Activated T-helper 2 cell treated with anti-CD3 and anti-CD28 coated beads, Interferon-gamma antibody, Interleukin-2, Interleukin-4, amounts not matched to agents 10 μg/mL and 5 μg/mL and 100 μg/mL, durations not matched to agents 14 hours and 24 hours and 36 hours (primary cell): ENCODE measurements at regions of chr2 and their contacts with region 1.

Region 1: GRCh38 chr2:20051532-20052228 is at the start of gene LAPTM4A:
- DNase-seq: peak; percentile 98
- H3K4me3 Mint-ChIP-seq: no peak within 1 kb of the TSS
- H3K27ac Mint-ChIP-seq: no peak within 1 kb of the TSS
- H3K4me1 Mint-ChIP-seq: peaks cover 23% of the 10 kb centered on the region
- H3K27me3 Mint-ChIP-seq: peaks cover 18% of the 10 kb centered on the region
- total RNA-seq, gene LAPTM4A: 26.9 and 27.3 TPM in 2 replicates

Region 2: DNA sequence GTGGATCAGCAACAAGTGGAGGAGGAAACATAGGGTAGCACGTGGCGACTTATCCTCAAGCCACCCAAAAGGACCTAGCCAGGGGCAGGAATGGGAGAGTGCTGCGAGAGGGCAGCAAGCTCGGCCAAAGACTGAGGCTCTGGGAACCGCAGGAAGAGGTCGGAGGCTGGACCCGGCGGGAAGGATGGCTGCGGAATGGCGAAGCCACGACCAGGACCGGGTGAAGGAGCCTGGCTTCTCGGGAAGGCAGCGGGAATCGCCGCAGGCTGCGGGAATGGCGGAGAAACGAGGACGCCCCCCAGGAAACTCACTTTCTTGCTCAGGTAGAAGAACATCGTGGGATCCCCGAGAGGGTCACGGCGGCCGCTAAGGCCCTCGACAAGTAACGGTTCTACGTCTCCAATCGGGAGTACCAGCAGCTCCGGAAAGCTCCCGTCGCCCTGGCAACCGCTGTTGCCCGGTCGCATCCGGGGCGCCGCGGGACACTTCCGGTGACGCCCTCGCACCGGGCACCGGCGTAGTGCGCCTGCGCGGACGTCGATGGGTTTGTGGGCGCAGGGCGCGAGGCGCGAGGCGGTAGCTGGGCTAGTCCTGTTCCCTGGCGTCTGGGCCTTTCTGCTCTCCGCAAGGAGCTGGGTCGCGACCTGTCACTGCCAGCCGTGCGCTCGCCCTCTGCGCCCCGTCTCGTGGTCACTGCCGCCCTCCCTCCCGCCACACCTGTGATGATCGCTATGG is 61.8 kb before region 1 on chr2 and contains the start of gene WDR35:
- intact Hi-C with region 1: loop called (anchors 1 kb)
- DNase-seq: peak; percentile 90
- H3K4me3 Mint-ChIP-seq: peak within 1 kb of the TSS; percentile 87
- H3K27ac Mint-ChIP-seq: peak within 1 kb of the TSS; percentile 70
- H3K4me1 Mint-ChIP-seq: peaks cover 18% of the 10 kb centered on the region
- H3K27me3 Mint-ChIP-seq: peaks cover 29% of the 10 kb centered on the region
- total RNA-seq, gene WDR35: 7.5 and 7.6 TPM in 2 replicates

Region 3: GRCh38 chr2:20015472-20016083 is 36.1 kb before region 1 on chr2:
- intact Hi-C with region 1: loop called (anchors 2 kb)
- DNase-seq: no peak
- H3K4me3 Mint-ChIP-seq: no peak overlapping the region
- H3K27ac Mint-ChIP-seq: no peak overlapping the region
- H3K4me1 Mint-ChIP-seq: peaks cover 3% of the 10 kb centered on the region
- H3K27me3 Mint-ChIP-seq: peaks cover 39% of the 10 kb centered on the region

Region 4: DNA sequence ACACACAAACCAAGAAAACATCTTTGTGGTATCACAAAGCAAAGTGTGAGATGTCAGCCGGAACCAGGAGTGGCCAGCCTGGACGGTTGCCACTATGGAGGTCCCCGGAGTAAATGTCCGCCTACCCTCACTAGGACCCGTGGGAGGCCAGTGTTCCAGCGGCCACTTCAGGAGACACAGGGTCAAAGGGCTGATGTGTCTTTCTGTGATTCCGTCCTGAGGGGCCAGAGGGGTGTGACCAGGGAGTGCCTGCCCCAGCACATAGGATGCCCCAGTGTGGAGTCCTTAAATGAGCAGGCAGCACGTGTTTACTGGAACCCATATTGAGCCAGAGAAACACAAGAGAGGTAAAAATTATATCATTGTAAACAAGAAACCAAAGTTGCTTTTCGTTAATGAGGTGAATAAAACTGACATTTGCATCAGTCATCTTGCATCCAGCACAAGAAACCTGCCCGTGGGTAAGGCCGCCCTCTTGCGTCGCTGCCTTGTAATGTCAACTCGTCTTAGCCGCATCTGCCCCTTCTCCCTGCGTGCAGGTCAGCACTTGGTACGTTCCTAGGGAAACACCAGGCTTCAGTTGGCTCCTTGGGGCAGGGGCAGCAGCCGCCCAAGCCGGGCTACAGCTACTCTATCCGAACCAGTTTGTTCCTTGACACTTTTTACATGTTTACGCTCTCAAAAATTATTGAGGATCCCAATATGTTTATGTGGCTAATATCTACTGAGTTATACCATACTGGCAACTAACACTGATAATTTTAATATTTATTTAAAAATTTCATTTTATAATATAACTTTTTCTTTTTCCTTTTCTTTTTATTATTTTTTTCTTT is 46.4 kb after region 1 on chr2:
- intact Hi-C with region 1: loop called (anchors 1 kb)
- DNase-seq: peak; percentile 46
- H3K4me3 Mint-ChIP-seq: no peak overlapping the region
- H3K27ac Mint-ChIP-seq: no peak overlapping the region
- H3K4me1 Mint-ChIP-seq: peaks cover 4% of the 10 kb centered on the region
- H3K27me3 Mint-ChIP-seq: peaks cover 10% of the 10 kb centered on the region

Region 5: GRCh38 chr2:20350753-20351554 is 299.3 kb after region 1 on chr2 and contains the start of gene PUM2:
- intact Hi-C with region 1: loop called (anchors 5 kb)
- DNase-seq: peak; percentile 97
- H3K4me3 Mint-ChIP-seq: peak within 1 kb of the TSS; percentile 93
- H3K27ac Mint-ChIP-seq: peak within 1 kb of the TSS; percentile 92
- H3K4me1 Mint-ChIP-seq: peaks cover 34% of the 10 kb centered on the region
- H3K27me3 Mint-ChIP-seq: no peaks in the 10 kb centered on the region
- total RNA-seq, gene PUM2: 121 and 127 TPM in 2 replicates

Region 6: DNA sequence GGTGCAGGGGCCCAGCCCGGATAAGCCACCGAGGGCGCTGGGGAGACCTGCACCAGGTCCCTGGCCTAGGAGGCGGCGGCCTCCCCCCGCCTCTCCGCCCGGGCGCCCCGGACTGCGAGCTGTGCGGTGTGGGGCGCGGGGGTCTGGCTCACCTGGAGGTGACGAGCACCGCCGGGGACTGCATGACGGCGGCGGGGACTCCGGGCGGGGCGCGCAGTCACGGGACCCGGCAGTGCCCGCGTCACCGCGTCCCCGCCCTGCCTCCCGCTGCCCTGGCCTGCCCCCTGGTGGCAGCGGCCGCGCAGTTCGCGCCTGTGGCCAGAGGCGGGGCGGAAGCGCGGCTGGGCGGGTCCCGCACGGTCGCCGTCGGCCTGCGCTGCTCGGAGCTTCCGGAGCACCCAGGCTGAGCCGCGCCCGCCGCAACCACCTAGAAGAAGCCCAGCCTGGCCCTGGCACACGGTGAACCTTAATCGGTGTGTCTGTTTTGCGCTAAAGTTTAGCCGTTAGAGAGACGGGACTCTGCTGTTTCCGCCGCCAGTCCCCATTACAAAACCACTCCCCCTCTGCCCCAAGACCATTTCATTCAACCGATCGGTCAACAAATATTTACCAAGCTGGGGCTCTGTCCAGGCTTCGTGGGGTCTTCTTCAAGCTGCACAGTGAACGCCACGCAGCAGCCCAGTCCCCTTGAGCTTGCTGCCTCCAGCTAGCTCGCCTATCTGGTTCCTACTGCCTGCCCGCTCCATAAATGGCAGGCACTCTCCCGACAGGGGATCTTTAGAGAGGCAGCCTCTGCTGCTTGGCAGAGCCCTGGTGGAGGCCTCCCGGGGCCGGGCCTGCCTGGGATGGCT is 599.4 kb after region 1 on chr2 and contains the start of gene HS1BP3:
- intact Hi-C with region 1: loop called (anchors 5 kb)
- DNase-seq: peak; percentile 88
- H3K4me3 Mint-ChIP-seq: peak within 1 kb of the TSS; percentile 87
- H3K27ac Mint-ChIP-seq: peak within 1 kb of the TSS; percentile 85
- H3K4me1 Mint-ChIP-seq: peaks cover 15% of the 10 kb centered on the region
- H3K27me3 Mint-ChIP-seq: peaks cover 10% of the 10 kb centered on the region
- total RNA-seq, gene HS1BP3: 11.5 and 11.9 TPM in 2 replicates